ENCODE measurements at regions of chr1 and their contacts with region 1.

Region 1: DNA sequence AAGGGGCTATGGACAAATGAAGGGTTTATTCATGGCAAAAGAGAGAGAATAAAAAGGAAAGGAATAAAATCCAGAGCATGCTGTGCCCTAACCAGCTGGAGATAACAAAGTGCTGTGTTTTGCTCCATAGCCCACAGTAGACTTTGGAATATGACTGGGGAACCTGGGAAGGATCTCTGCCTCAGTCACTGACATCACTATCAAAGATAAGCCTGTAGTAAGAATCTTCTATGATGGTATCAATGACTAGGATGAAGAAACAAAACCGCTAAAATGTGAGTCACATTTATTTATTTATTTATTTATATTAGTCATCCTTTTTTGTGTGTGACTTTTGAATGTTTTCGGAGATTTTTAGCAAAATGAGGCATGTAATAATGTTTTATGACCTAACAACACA is 56.3 kb downstream of the NVL start:
- DNase-seq: peak; percentile 72
- ATAC-seq: peak; percentile 57
- H3K4me3 ChIP-seq: no peak overlapping the region
- H3K27ac ChIP-seq: peak overlapping the region; percentile 45
- H3K4me1 ChIP-seq: peaks cover 7% of the 10 kb centered on the region; the same call in 1 of the 2 replicates
- H3K27me3 ChIP-seq: no peaks in the 10 kb centered on the region
- CTCF ChIP-seq: no peak

Region 2: DNA sequence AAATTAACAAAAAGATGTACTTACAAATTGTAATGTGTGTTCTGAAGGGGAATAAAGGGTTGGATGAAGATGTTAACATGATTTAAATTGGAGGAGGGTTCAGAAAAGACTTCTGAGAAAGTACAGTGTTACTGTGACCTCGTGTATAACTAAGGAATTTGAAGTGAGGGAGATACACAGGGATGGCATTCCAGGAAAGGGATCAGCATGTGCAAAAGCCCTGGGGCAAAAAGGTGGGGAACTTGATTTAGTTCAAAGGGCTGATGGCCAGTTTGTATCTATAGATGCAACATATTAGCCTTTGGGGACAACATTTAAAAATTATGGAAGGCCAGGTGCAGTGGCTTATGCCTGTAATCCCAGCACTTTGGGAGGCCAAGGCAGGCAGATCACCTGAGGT is 123.9 kb before region 1 on chr1:
- CTCF ChIA-PET with region 1: interaction called, 10 read pairs
- POLR2A ChIA-PET with region 1: interaction called, 3 read pairs
- intact Hi-C with region 1: no loop called
- DNase-seq: peak; percentile 34
- ATAC-seq: peak; percentile 33; the same call in 1 of the 2 replicates
- H3K4me3 ChIP-seq: no peak overlapping the region
- H3K27ac ChIP-seq: no peak overlapping the region
- H3K4me1 ChIP-seq: no peaks in the 10 kb centered on the region
- H3K27me3 ChIP-seq: no peaks in the 10 kb centered on the region
- CTCF ChIP-seq: no peak

Region 3: GRCh38 chr1:224300314-224300713 is 26.7 kb after region 1 on chr1:
- CTCF ChIA-PET with region 1: no interaction called
- POLR2A ChIA-PET with region 1: interaction called, 5 read pairs
- intact Hi-C with region 1: loop called (anchors 2 kb)
- DNase-seq: peak; percentile 95
- ATAC-seq: peak; percentile 92
- H3K4me3 ChIP-seq: no peak overlapping the region; the same call in 1 of the 2 replicates
- H3K27ac ChIP-seq: peak overlapping the region; percentile 61
- H3K4me1 ChIP-seq: peaks cover 46% of the 10 kb centered on the region
- H3K27me3 ChIP-seq: no peaks in the 10 kb centered on the region
- CTCF ChIP-seq: no peak

Region 4: DNA sequence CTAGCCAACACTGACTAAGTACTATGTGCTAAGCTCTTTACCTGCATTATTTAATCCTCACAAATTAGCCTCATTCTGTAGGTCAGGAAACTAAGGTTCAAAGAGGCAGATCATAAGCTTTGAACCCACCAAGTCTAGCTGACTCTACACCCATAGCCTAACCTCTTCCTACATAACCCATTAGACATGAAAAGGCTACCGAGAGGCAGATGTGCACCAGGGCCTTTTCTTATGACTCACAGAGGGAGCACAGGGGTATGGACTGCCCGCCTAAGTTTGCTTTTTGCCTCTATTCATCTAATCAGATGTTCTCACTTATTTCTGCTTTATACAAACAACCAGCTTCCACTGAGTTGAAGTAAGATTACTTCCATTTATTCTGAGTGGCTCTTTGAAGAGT is 1122.7 kb after region 1 on chr1:
- CTCF ChIA-PET with region 1: no interaction called
- POLR2A ChIA-PET with region 1: no interaction called
- intact Hi-C with region 1: no loop called
- DNase-seq: no peak
- ATAC-seq: no peak
- H3K4me3 ChIP-seq: no peak overlapping the region
- H3K27ac ChIP-seq: no peak overlapping the region
- H3K4me1 ChIP-seq: no peaks in the 10 kb centered on the region
- H3K27me3 ChIP-seq: no peaks in the 10 kb centered on the region
- CTCF ChIP-seq: no peak

Measured in PC-3 (cell line).